Prostate gland (tissue), 2 donors: ENCODE measurements at regions of chr1 and their contacts with region 1.

Region 1: DNA sequence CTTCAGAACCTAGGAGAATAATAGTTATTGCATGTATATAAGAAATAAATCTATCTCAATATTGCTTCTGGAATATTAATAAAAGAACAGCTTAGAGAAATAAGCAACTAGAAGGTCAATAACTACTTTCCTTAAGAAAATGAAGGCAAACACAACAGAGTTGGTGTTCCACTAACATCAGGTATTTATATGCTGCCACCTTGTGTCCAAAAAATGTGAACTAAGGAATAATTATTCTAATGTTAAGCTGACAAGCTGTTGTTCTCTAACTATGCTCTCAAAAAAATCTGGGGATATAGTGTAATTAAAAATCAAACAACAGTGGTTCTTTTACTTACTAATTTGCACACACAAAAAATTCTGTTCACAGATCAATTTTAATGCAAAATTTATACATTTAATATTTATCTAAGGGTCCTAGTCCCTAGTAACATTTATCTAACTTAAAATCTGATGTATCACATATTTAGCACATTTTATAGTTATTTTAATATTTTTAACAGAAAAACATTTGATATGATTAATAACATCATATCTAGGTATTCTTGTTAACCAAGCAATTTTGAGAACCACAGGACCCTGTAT is 39.6 kb downstream of the UCHL5 start:
- DNase-seq: peak; percentile 34
- H3K4me3 ChIP-seq: no peak overlapping the region
- H3K27ac ChIP-seq: no peak overlapping the region
- H3K4me1 ChIP-seq: no peaks in the 10 kb centered on the region
- H3K27me3 ChIP-seq: no peaks in the 10 kb centered on the region
- CTCF ChIP-seq: peak; percentile 29 to 78 (median 68)
- POLR2A ChIP-seq: no peak

Region 2: GRCh38 chr1:192609110-192610079 is 410.1 kb before region 1 on chr1:
- intact Hi-C with region 1: loop called (anchors 10 kb)
- DNase-seq: peak; percentile 11
- H3K4me3 ChIP-seq: no peak overlapping the region
- H3K27ac ChIP-seq: no peak overlapping the region
- H3K4me1 ChIP-seq: no peaks in the 10 kb centered on the region
- H3K27me3 ChIP-seq: no peaks in the 10 kb centered on the region
- CTCF ChIP-seq: no peak
- POLR2A ChIP-seq: no peak

Region 3: GRCh38 chr1:192913683-192914082 is 105.9 kb before region 1 on chr1:
- intact Hi-C with region 1: loop called (anchors 5 kb)
- DNase-seq: no peak
- H3K4me3 ChIP-seq: no peak overlapping the region
- H3K27ac ChIP-seq: peak overlapping the region; percentile 30 to 65
- H3K4me1 ChIP-seq: no peaks in the 10 kb centered on the region
- H3K27me3 ChIP-seq: no peaks in the 10 kb centered on the region
- CTCF ChIP-seq: no peak
- POLR2A ChIP-seq: no peak

Region 4: DNA sequence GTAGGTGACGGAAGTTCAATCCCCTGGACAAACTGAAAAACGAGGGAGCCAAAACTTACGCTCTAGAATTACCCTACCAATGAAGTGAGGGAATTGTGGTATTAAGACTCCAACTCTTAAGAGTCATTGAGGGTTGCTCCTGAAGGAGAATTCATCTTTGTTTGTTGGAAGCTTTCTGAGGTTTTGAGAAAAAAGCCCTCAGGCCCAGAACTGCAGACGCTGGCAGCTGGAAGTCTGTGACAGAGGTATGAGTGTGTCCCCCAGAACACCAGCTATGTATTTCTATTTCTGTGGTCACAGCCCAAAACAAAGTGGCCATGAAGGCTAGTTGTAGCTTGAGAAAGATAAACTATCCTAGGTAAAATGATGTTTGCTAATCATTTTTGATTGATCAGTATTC is 605.7 kb after region 1 on chr1:
- intact Hi-C with region 1: no loop called
- DNase-seq: no peak
- H3K4me3 ChIP-seq: no peak overlapping the region
- H3K27ac ChIP-seq: no peak overlapping the region
- H3K4me1 ChIP-seq: no peaks in the 10 kb centered on the region
- H3K27me3 ChIP-seq: no peaks in the 10 kb centered on the region
- CTCF ChIP-seq: no peak
- POLR2A ChIP-seq: no peak